ENCODE measurements at regions of chr16 and their contacts with region 1.

Region 1: DNA sequence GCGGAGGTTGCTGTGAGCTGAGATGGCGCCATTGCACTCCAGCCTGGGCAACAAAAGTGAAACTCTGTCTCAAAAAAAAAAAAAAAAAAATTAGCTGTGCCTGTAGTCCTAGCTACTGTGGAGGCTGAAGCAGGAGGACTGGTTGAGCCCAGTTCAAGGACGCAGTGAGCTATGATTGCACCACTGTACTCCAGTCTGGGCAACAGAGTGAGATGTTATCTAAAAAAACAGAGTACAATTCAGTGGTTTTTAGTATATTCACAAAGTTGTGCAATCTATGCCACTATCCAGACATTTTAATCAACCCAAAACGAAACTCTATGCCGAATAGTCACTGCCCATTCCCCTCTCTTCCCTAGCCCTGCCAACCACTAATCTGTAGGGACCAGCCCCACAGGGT is 25.1 kb downstream of the C16orf54 start:
- DNase-seq: no peak
- ATAC-seq: no peak
- H3K4me3 ChIP-seq: no peak overlapping the region
- H3K27ac ChIP-seq: no peak overlapping the region
- H3K4me1 ChIP-seq: no peaks in the 10 kb centered on the region; the same call in 1 of the 2 replicates
- H3K27me3 ChIP-seq: no peaks in the 10 kb centered on the region
- CTCF ChIP-seq: no peak
- EP300 ChIP-seq: no peak
- POLR2A ChIP-seq: no peak
- RAD21 ChIP-seq: no peak

Region 2: GRCh38 chr16:29694384-29695195 is 26.1 kb before region 1 on chr16:
- CTCF ChIA-PET with region 1: interaction called, 10 read pairs
- POLR2A ChIA-PET with region 1: no interaction called
- RAD21 ChIA-PET with region 1: interaction called, 6 read pairs
- SMC1A ChIA-PET with region 1: interaction called, 7 read pairs
- in situ Hi-C with region 1: no loop called
- intact Hi-C with region 1: no loop called
- DNase-seq: no peak
- ATAC-seq: peak; percentile 44
- H3K4me3 ChIP-seq: no peak overlapping the region
- H3K27ac ChIP-seq: no peak overlapping the region
- H3K4me1 ChIP-seq: peaks cover 7% of the 10 kb centered on the region
- H3K27me3 ChIP-seq: no peaks in the 10 kb centered on the region
- CTCF ChIP-seq: no peak
- EP300 ChIP-seq: no peak
- POLR2A ChIP-seq: no peak
- RAD21 ChIP-seq: no peak

Region 3: GRCh38 chr16:29891525-29892457 is 171.1 kb after region 1 on chr16:
- CTCF ChIA-PET with region 1: no interaction called
- POLR2A ChIA-PET with region 1: no interaction called
- RAD21 ChIA-PET with region 1: no interaction called
- SMC1A ChIA-PET with region 1: no interaction called
- in situ Hi-C with region 1: no loop called
- intact Hi-C with region 1: no loop called
- DNase-seq: no peak
- ATAC-seq: no peak
- H3K4me3 ChIP-seq: no peak overlapping the region
- H3K27ac ChIP-seq: no peak overlapping the region
- H3K4me1 ChIP-seq: no peaks in the 10 kb centered on the region
- H3K27me3 ChIP-seq: no peaks in the 10 kb centered on the region
- CTCF ChIP-seq: no peak
- EP300 ChIP-seq: no peak
- POLR2A ChIP-seq: no peak
- RAD21 ChIP-seq: no peak

Region 4: DNA sequence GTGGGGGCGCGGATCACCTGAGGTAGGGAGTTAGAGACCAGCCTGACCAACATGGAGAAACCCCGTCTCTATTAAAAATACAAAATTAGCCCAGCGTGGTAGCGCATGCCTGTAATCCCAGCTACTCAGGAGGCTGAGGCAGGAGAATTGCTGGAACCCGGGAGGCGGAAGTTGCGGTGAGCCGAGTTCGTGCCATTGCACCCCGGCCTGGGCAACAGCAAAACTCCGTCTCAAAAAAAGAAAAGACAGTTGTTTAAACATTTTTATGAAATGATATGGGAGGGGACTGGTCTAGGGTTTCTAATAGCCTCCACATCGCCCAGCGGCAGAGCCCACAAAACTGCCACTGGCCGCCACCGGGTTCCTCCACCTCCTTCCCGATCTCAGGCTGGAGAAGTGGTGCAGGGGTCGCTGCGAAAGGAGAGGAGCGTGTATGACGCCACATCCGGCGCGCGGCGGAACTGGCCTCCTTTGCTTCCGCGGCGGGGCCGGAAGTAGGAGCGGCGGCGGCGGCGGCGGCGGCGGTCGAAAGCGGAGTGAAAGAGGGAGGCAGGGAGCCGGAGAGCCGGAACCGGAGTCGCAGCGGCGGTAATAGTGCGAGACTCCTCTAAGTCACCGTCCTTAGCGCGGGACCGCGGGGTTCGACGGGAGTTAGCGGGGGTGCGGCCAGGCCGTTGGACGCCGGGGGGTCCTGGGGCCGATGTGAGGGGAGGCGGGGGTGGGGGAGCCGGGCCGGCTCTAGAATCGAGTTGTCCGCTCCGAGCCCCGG is 355.0 kb after region 1 on chr16 and contains the start of gene PPP4C:
- CTCF ChIA-PET with region 1: no interaction called
- POLR2A ChIA-PET with region 1: no interaction called
- RAD21 ChIA-PET with region 1: no interaction called
- SMC1A ChIA-PET with region 1: no interaction called
- in situ Hi-C with region 1: no loop called
- intact Hi-C with region 1: no loop called
- DNase-seq: no peak
- ATAC-seq: peak; percentile 90
- H3K4me3 ChIP-seq: peak within 1 kb of the TSS; percentile 92
- H3K27ac ChIP-seq: peak within 1 kb of the TSS; percentile 84
- H3K4me1 ChIP-seq: peaks cover 10% of the 10 kb centered on the region
- H3K27me3 ChIP-seq: no peaks in the 10 kb centered on the region
- CTCF ChIP-seq: no peak; a peak in 1 of 6 replicates
- EP300 ChIP-seq: no peak
- POLR2A ChIP-seq: peak; percentile 88
- RAD21 ChIP-seq: no peak
- polyA plus RNA-seq, gene PPP4C: 2.7 to 18.8 TPM